ENCODE measurements at regions of chr10 and their contacts with region 1.

Region 1: DNA sequence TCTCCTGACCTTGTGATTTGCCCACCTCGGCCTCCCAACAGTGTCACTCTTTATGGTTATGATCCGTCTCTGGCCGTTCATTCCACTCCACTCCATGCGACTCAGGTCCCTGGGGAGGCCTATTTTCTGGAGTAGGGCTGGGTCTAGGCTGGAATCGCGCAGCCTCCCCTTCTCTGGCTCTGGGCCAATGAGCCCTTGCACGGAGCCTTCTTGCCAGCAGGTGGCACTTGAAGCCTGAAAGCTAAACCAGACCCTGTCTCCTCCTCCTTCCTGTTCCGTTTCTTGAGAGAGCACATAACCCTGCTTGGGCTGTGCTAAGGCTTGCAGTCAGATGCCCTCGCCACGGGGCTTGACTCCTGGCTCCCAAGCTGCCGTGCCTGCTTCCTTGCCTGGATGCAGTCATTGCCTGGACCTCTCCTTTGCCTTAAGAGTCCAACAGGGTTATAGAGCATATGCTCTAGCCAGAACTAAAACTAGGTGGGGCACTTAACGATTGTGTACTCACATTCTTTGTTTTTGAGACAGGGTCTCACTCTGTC is 9.6 kb upstream of the DNAJB12 start:
- DNase-seq: peak; percentile 87
- CTCF ChIP-seq: peak; percentile 93

Region 2: DNA sequence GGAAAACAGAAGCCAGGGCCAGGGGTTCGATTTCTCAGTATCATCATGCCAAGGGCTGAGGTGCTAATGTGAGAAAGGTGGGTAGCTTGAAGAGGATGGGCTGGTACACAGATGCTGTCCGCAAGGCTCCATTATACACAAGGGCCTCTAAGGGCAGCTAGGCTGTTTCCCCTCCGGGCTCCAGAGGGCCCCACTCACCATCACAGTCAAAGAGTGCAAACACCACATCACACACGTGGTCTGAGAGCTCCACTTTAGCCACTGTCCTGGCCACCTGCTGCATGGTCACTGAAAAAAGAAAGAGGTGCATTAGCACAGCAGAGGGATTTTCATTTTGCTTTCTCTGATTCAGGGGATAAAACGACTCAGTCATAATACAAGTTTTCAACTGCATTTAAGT is 11.3 kb after region 1 on chr10:
- CTCF ChIA-PET with region 1: interaction called, 27 read pairs
- POLR2A ChIA-PET with region 1: no interaction called
- DNase-seq: no peak
- CTCF ChIP-seq: peak; percentile 2

Region 3: DNA sequence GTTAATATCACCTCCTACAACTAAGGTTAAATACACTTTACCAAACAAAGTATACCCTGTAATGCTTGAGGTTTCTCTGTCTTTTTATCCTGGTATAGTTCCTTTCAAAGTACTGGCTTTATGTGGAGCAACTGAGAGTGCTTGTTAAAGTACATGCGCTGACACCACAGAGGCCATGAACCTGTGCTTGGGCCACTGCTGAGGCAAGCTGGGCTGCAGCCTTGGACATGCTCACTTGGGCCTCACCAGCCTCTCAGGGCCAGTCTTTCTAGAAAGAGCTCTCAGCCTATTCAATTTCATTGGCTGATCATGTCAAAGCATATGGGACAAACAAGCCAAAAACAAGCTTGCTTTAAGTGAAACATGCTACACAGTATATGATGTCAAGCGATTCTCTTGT is 116.6 kb after region 1 on chr10:
- CTCF ChIA-PET with region 1: no interaction called
- POLR2A ChIA-PET with region 1: no interaction called
- DNase-seq: no peak
- CTCF ChIP-seq: no peak

Region 4: DNA sequence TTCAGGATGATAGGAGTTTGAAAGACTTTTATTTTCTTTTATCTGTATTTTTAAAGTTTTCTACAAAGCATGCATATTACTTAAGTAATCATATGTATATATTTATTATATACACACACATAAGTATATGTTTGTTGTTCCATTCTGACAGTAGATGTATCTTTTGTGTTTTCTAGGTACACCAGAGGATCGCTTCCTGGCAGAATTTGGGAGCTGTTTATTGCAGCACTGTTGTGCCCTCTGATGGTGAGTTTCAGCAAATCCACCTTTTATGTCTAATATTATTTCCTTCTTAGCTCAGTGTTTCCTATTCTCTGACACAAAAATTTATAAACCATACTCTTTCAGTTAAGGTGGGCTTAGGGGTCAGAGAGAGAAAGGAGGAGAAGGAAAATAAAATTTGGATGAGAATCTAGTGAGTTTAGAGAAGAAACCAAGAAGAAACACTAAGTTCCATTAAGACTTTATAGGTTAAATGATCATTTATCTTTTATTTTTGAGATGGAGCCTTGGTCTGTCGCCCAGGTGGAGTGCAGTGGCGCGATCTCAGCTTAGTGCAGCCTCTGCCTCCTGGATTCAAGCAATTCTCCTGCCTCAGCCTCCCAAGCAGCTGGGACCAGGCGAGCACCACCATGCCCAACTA is 470.0 kb after region 1 on chr10:
- CTCF ChIA-PET with region 1: interaction called, 103 read pairs
- POLR2A ChIA-PET with region 1: no interaction called
- DNase-seq: peak; percentile 57
- CTCF ChIP-seq: peak; percentile 65

Region 5: GRCh38 chr10:72875250-72876055 is 511.1 kb after region 1 on chr10:
- CTCF ChIA-PET with region 1: interaction called, 17 read pairs
- POLR2A ChIA-PET with region 1: no interaction called
- DNase-seq: peak; percentile 33
- CTCF ChIP-seq: peak; percentile 66

Region 6: GRCh38 chr10:73060738-73061635 is 696.7 kb after region 1 on chr10:
- CTCF ChIA-PET with region 1: interaction called, 13 read pairs
- POLR2A ChIA-PET with region 1: no interaction called
- DNase-seq: peak; percentile 22
- CTCF ChIP-seq: peak; percentile 20